ENCODE measurements at regions of chr13 and their contacts with region 1.

Region 1: GRCh38 chr13:108915634-108916512 is 286.5 kb downstream of the MYO16 start:
- DNase-seq: peak; percentile 81 to 96
- H3K4me3 ChIP-seq: peak overlapping the region; percentile 47
- H3K27ac ChIP-seq: peak overlapping the region; percentile 96
- H3K4me1 ChIP-seq: peaks cover 56% of the 10 kb centered on the region
- H3K27me3 ChIP-seq: no peaks in the 10 kb centered on the region
- CTCF ChIP-seq: no peak

Region 2: GRCh38 chr13:109145631-109146030 is 229.8 kb after region 1 on chr13:
- CTCF ChIA-PET with region 1: no interaction called
- POLR2A ChIA-PET with region 1: no interaction called
- intact Hi-C with region 1: loop called (anchors 5 kb)
- DNase-seq: peak; percentile 37 to 64
- H3K4me3 ChIP-seq: no peak overlapping the region
- H3K27ac ChIP-seq: no peak overlapping the region
- H3K4me1 ChIP-seq: peaks cover 8% of the 10 kb centered on the region; the same call in 1 of the 2 replicates
- H3K27me3 ChIP-seq: no peaks in the 10 kb centered on the region
- CTCF ChIP-seq: peak; percentile 87

Region 3: DNA sequence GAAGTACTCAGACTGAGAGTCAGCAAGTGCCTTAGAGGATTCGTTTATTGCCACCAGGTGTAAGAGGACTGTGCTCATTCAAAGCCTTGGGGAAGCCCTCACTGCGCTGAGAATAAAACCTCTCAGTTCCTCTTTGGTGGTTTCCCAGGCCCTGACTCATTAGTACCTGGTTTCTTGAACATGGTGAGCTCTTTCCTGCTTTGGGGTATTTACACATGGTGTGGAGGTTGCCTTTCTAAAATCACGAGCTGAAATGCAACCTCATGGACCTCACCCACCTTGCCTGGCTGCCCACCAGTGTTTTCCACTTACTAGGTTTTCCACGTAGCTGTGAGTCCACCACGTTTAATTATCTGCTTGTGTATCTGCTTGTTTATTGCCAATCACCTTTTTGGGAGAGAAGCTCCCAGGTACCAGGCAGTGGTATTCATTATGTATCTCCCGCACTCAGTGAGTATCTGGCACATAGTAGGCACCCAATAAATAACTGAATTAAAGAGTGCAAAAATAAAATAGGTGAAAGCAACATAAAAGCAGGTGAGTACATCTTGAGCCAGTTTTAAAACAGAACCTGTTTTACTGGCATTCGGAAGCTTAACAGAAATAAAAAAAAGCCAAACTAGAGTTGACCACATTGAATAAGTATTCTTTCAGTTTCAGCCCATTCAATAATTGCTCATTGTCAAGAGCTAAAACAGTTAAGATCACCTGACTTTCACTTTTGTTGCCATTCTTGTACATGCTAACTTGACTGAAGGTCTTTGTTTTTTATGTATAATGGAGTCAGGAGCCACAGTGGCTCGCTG is 246.6 kb after region 1 on chr13:
- CTCF ChIA-PET with region 1: no interaction called
- POLR2A ChIA-PET with region 1: no interaction called
- intact Hi-C with region 1: no loop called
- DNase-seq: peak in 1 of 2 experiments; percentile 80
- H3K4me3 ChIP-seq: no peak overlapping the region
- H3K27ac ChIP-seq: peak overlapping the region; percentile 37; the same call in 1 of the 2 replicates
- H3K4me1 ChIP-seq: peaks cover 45% of the 10 kb centered on the region
- H3K27me3 ChIP-seq: no peaks in the 10 kb centered on the region
- CTCF ChIP-seq: no peak

Region 4: DNA sequence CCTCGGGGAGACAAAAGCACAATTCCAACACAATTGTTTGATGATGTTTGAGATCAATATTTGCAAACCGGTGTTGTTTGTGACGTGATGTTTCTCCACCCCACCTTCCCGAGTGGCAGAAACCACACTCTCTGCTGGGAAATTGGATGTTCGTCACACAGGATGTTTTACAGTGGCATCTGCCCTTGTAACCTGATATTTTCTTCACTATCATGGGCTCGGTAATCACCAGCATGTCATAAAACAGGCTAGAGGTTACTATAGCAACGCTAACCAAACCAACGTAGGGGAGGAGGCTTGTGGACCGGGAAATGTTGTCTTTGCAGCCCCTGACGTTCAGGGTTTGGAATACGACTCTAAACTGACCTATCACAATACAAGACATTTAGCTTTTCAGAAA is 416.0 kb after region 1 on chr13:
- CTCF ChIA-PET with region 1: no interaction called
- POLR2A ChIA-PET with region 1: no interaction called
- intact Hi-C with region 1: loop called (anchors 5 kb)
- DNase-seq: peak in 1 of 2 experiments; percentile 49
- H3K4me3 ChIP-seq: no peak overlapping the region
- H3K27ac ChIP-seq: no peak overlapping the region
- H3K4me1 ChIP-seq: peaks cover 23% of the 10 kb centered on the region
- H3K27me3 ChIP-seq: no peaks in the 10 kb centered on the region
- CTCF ChIP-seq: no peak

Region 5: DNA sequence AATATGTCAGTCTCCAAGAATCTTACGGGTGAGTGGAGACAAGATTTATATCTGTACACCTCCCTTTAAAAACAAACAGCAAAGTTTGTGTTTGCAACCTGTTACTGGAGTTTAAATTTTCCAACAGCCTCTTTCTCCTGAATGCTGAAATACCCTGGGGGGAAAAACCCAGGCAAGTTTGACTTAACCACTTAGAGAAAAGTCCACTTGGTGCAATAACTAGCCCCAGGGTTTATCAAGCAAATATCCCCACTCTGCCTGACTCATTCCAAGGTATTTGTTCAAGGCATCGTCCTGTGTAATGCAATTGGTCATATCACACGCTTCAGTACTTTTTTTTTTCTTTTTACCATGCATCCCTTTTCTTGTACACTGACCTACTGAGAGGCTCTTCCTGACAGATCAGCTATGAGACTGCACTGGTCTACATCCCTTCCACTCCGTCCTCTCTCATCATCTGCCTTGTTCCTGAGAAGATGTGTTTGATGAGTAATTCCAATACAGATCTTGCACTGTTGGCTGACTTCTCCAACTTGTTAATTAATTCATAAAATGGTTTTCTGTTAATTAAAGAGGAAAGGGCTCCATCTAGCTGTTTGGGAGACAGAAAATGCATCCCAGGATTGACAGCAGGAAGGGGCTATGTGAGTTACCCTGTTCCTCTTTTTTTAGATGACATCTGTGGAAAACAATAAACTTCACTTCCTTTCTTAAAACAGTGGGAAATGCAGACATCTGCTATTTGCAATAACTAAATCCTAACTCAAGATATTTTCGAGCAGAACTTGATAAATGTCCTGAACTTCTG is 1083.1 kb after region 1 on chr13:
- CTCF ChIA-PET with region 1: no interaction called
- POLR2A ChIA-PET with region 1: no interaction called
- intact Hi-C with region 1: loop called (anchors 2 kb)
- DNase-seq: peak; percentile 71 to 100
- H3K4me3 ChIP-seq: peak overlapping the region; percentile 1; the same call in 1 of the 2 replicates
- H3K27ac ChIP-seq: peak overlapping the region; percentile 45
- H3K4me1 ChIP-seq: peaks cover 50% of the 10 kb centered on the region
- H3K27me3 ChIP-seq: no peaks in the 10 kb centered on the region
- CTCF ChIP-seq: peak; percentile 33; the same call in 1 of the 2 replicates

Region 6: GRCh38 chr13:110216398-110217041 is 1300.6 kb after region 1 on chr13:
- CTCF ChIA-PET with region 1: no interaction called
- POLR2A ChIA-PET with region 1: no interaction called
- intact Hi-C with region 1: loop called (anchors 10 kb)
- DNase-seq: peak in 1 of 2 experiments; percentile 34
- H3K4me3 ChIP-seq: no peak overlapping the region
- H3K27ac ChIP-seq: no peak overlapping the region
- H3K4me1 ChIP-seq: no peaks in the 10 kb centered on the region
- H3K27me3 ChIP-seq: no peaks in the 10 kb centered on the region
- CTCF ChIP-seq: no peak

Measured in PC-9 (cell line).